WTC11 (cell line): ENCODE measurements at regions of chr6 and their contacts with region 1.

Region 1: GRCh38 chr6:42547407-42548329 is 16.2 kb upstream of the UBR2 start:
- DNase-seq: peak; percentile 88
- ATAC-seq: peak; percentile 96
- H3K4me3 Mint-ChIP-seq: peak overlapping the region; percentile 78
- H3K27ac Mint-ChIP-seq: peak overlapping the region; percentile 45; the same call in 1 of the 2 replicates
- H3K4me1 Mint-ChIP-seq: peaks cover 14% of the 10 kb centered on the region
- H3K27me3 Mint-ChIP-seq: peaks cover 8% of the 10 kb centered on the region
- CTCF ChIP-seq: peak; percentile 98

Region 2: GRCh38 chr6:42260972-42261371 is 286.7 kb before region 1 on chr6:
- CTCF ChIA-PET with region 1: interaction called, 132 read pairs
- POLR2A ChIA-PET with region 1: no interaction called
- DNase-seq: peak; percentile 79
- ATAC-seq: peak; percentile 71
- H3K4me3 Mint-ChIP-seq: no peak overlapping the region
- H3K27ac Mint-ChIP-seq: no peak overlapping the region
- H3K4me1 Mint-ChIP-seq: peaks cover 43% of the 10 kb centered on the region
- H3K27me3 Mint-ChIP-seq: no peaks in the 10 kb centered on the region
- CTCF ChIP-seq: peak; percentile 46

Region 3: GRCh38 chr6:42367353-42368011 is 180.2 kb before region 1 on chr6:
- CTCF ChIA-PET with region 1: interaction called, 15 read pairs
- POLR2A ChIA-PET with region 1: no interaction called
- DNase-seq: no peak
- ATAC-seq: no peak
- H3K4me3 Mint-ChIP-seq: no peak overlapping the region
- H3K27ac Mint-ChIP-seq: no peak overlapping the region
- H3K4me1 Mint-ChIP-seq: peaks cover 27% of the 10 kb centered on the region
- H3K27me3 Mint-ChIP-seq: no peaks in the 10 kb centered on the region
- CTCF ChIP-seq: no peak

Region 4: GRCh38 chr6:42417641-42418112 is 130.0 kb before region 1 on chr6:
- CTCF ChIA-PET with region 1: interaction called, 18 read pairs
- POLR2A ChIA-PET with region 1: interaction called, 4 read pairs
- DNase-seq: no peak
- ATAC-seq: no peak
- H3K4me3 Mint-ChIP-seq: no peak overlapping the region
- H3K27ac Mint-ChIP-seq: no peak overlapping the region
- H3K4me1 Mint-ChIP-seq: peaks cover 63% of the 10 kb centered on the region
- H3K27me3 Mint-ChIP-seq: no peaks in the 10 kb centered on the region
- CTCF ChIP-seq: no peak

Region 5: GRCh38 chr6:42471142-42471541 is 76.5 kb before region 1 on chr6:
- CTCF ChIA-PET with region 1: interaction called, 10 read pairs
- POLR2A ChIA-PET with region 1: no interaction called
- DNase-seq: no peak
- ATAC-seq: no peak
- H3K4me3 Mint-ChIP-seq: no peak overlapping the region
- H3K27ac Mint-ChIP-seq: no peak overlapping the region
- H3K4me1 Mint-ChIP-seq: peaks cover 8% of the 10 kb centered on the region
- H3K27me3 Mint-ChIP-seq: peaks cover 4% of the 10 kb centered on the region; the same call in 1 of the 2 replicates
- CTCF ChIP-seq: no peak

Region 6: DNA sequence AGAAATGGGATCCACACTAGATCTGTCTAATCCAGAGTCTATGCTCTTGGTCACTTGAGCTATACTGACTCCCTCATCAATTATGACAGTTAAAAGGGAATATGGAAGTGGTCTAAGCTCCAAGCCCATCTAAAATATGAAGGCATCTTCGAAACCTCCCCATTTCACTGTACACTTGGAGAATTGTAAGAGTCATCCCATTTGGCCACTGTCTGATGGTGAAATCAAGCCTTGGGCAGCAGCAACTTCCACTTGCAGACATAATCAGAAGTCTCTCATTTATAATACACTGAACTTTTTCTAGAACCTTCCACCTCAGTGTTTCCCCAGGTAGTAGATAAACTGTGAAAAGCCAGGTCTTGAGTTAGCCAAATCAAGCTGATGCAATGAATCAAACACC is 10.1 kb before region 1 on chr6:
- CTCF ChIA-PET with region 1: interaction called, 31 read pairs
- POLR2A ChIA-PET with region 1: no interaction called
- DNase-seq: no peak
- ATAC-seq: no peak
- H3K4me3 Mint-ChIP-seq: no peak overlapping the region
- H3K27ac Mint-ChIP-seq: no peak overlapping the region
- H3K4me1 Mint-ChIP-seq: no peaks in the 10 kb centered on the region
- H3K27me3 Mint-ChIP-seq: no peaks in the 10 kb centered on the region; the same call in 1 of the 2 replicates
- CTCF ChIP-seq: no peak